Activated CD8-positive, alpha-beta T cell treated with anti-CD3 and anti-CD28 coated beads, Interleukin-2, amount 10 ng/mL, durations not matched to agents 7 days and 5 days (primary cell): ENCODE measurements at regions of chr2 and their contacts with region 1.

Region 1: GRCh38 chr2:206783718-206784117 is 18.3 kb downstream of the FASTKD2 start:
- DNase-seq: no peak
- ATAC-seq: no peak
- H3K4me3 Mint-ChIP-seq: no peak overlapping the region
- H3K27ac Mint-ChIP-seq: no peak overlapping the region
- H3K4me1 Mint-ChIP-seq: peaks cover 2% of the 10 kb centered on the region
- H3K27me3 Mint-ChIP-seq: no peaks in the 10 kb centered on the region

Region 2: GRCh38 chr2:206642075-206643025 is 141.4 kb before region 1 on chr2 and contains the start of gene FAM237A:
- CTCF ChIA-PET with region 1: no interaction called
- POLR2A ChIA-PET with region 1: no interaction called
- DNase-seq: peak; percentile 51
- ATAC-seq: peak; percentile 61
- H3K4me3 Mint-ChIP-seq: no peak within 1 kb of the TSS
- H3K27ac Mint-ChIP-seq: no peak within 1 kb of the TSS
- H3K4me1 Mint-ChIP-seq: no peaks in the 10 kb centered on the region
- H3K27me3 Mint-ChIP-seq: no peaks in the 10 kb centered on the region
- total RNA-seq, gene FAM237A: not detected

Region 3: GRCh38 chr2:206693399-206694137 is 90.2 kb before region 1 on chr2:
- CTCF ChIA-PET with region 1: interaction called, 13 read pairs
- POLR2A ChIA-PET with region 1: no interaction called
- DNase-seq: peak; percentile 55
- ATAC-seq: peak; percentile 55
- H3K4me3 Mint-ChIP-seq: no peak overlapping the region
- H3K27ac Mint-ChIP-seq: no peak overlapping the region
- H3K4me1 Mint-ChIP-seq: peaks cover 3% of the 10 kb centered on the region
- H3K27me3 Mint-ChIP-seq: peaks cover 4% of the 10 kb centered on the region

Region 4: GRCh38 chr2:206765242-206766056 is 18.3 kb before region 1 on chr2 and contains the starts of genes FASTKD2 and MDH1B:
- CTCF ChIA-PET with region 1: interaction called, 18 read pairs
- POLR2A ChIA-PET with region 1: no interaction called
- DNase-seq: peak; percentile 88
- ATAC-seq: peak; percentile 92
- H3K4me3 Mint-ChIP-seq: peak within 1 kb of the TSS; percentile 90
- H3K27ac Mint-ChIP-seq: peak within 1 kb of the TSS; percentile 96
- H3K4me1 Mint-ChIP-seq: peaks cover 35% of the 10 kb centered on the region
- H3K27me3 Mint-ChIP-seq: no peaks in the 10 kb centered on the region
- total RNA-seq, gene FASTKD2: 20.2 to 20.8 TPM
- total RNA-seq, gene MDH1B: 0.55 to 0.57 TPM